Endothelial cell of umbilical vein (primary cell): ENCODE measurements at regions of chr6 and their contacts with region 1.

Region 1: DNA sequence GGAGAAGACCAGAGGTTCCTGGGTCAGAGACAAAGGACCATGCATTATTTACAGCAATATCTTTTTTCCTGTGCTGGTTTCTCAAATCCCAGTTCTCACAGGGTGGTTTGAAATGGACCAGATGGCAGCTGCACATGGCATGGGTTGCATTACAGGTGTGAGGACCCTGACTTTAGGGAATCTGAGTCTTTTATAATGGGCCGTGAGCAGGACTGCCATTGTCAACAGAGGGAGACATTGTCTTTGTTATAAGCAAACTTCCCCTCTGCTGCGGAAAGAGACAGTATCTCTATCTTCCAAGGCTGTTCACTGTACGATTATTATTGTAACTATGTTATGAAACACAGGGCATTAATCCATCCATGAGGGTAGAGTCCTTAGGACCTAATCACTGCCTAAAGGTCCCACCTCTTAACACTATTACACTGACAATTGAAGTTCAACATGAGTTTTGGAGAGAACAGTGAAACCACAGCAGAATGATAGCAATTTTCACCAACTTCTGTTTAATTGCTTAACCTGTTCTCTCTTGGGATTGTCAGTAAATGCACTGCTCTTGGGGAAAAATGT is 156.1 kb upstream of the AGPAT4 start:
- DNase-seq: peak; percentile 14
- H3K4me3 ChIP-seq: no peak overlapping the region
- H3K27ac ChIP-seq: no peak overlapping the region
- H3K4me1 ChIP-seq: no peaks in the 10 kb centered on the region
- H3K27me3 ChIP-seq: no peaks in the 10 kb centered on the region
- CTCF ChIP-seq: peak in 1 of 2 donors; percentile 14
- POLR2A ChIP-seq: no peak

Region 2: DNA sequence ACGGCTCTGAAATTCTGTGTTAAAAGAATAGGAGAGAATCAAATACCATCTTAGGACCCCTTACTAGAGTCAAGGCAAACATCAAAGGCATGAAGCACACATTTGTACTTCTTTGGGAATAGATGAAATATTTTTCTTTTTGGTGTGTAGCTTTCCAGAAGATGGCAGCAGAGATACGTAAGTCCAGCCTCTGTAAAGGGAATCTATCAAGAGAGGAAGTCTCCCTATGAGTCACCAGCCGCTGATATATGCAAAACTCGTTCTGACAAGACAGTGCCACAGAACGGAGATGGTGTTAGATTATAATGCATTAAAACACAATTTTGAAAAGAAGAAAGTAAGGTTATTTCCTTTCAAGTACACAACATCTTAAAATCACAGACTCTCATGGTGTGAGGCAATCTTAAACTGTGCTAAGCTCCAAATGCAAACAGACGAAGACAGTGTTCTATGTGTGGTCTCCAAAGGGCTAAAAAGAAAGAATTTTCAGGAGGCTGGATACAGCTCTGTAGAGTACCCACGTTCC is 36.1 kb before region 1 on chr6:
- CTCF ChIA-PET with region 1: no interaction called
- POLR2A ChIA-PET with region 1: no interaction called
- dilution Hi-C with region 1: no loop called
- intact Hi-C with region 1: no loop called
- DNase-seq: peak; percentile 72
- H3K4me3 ChIP-seq: no peak overlapping the region
- H3K27ac ChIP-seq: no peak overlapping the region
- H3K4me1 ChIP-seq: no peaks in the 10 kb centered on the region
- H3K27me3 ChIP-seq: no peaks in the 10 kb centered on the region
- CTCF ChIP-seq: peak; percentile 34 to 37
- POLR2A ChIP-seq: no peak

Region 3: GRCh38 chr6:161694995-161695394 is 265.0 kb after region 1 on chr6:
- CTCF ChIA-PET with region 1: no interaction called
- POLR2A ChIA-PET with region 1: no interaction called
- dilution Hi-C with region 1: no loop called
- intact Hi-C with region 1: loop called (anchors 1 kb)
- DNase-seq: peak; percentile 4
- H3K4me3 ChIP-seq: no peak overlapping the region
- H3K27ac ChIP-seq: no peak overlapping the region
- H3K4me1 ChIP-seq: no peaks in the 10 kb centered on the region
- H3K27me3 ChIP-seq: no peaks in the 10 kb centered on the region
- CTCF ChIP-seq: peak in 1 of 2 donors; percentile 9
- POLR2A ChIP-seq: no peak